Activated B cell treated with CpG ODN at 0.5 μM for 24 hours (primary cell): ENCODE measurements at regions of chr7 and their contacts with region 1.

Region 1: DNA sequence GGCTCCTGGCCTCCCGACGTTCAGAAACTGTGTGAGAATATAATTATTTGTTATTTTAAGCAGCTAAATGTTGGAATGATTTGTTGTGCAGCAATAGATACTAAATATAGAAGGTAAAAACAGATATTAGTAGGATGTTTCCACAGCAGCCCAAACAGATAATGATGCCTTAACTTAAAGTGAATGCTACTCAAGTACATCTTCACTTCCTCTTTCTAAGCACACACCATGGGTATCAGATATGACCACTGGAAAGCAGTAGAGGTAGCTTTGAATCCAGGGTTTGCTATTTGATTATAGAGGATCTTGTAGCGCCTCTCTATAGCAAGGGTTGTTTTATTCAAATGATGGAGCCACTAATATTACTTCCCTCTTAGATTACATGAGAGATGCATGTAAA is 38.2 kb upstream of the BET1 start:
- DNase-seq: no peak
- ATAC-seq: peak; percentile 80
- H3K4me3 Mint-ChIP-seq: no peak overlapping the region
- H3K27ac Mint-ChIP-seq: no peak overlapping the region
- H3K4me1 Mint-ChIP-seq: peaks cover 60% of the 10 kb centered on the region
- H3K27me3 Mint-ChIP-seq: no peaks in the 10 kb centered on the region
- CTCF ChIP-seq: no peak

Region 2: GRCh38 chr7:94028768-94029167 is 13.6 kb before region 1 on chr7:
- CTCF ChIA-PET with region 1: no interaction called
- POLR2A ChIA-PET with region 1: no interaction called
- intact Hi-C with region 1: loop called (anchors 1 kb)
- DNase-seq: no peak
- ATAC-seq: no peak
- H3K4me3 Mint-ChIP-seq: no peak overlapping the region
- H3K27ac Mint-ChIP-seq: no peak overlapping the region
- H3K4me1 Mint-ChIP-seq: peaks cover 13% of the 10 kb centered on the region
- H3K27me3 Mint-ChIP-seq: no peaks in the 10 kb centered on the region
- CTCF ChIP-seq: no peak

Region 3: GRCh38 chr7:94060752-94061151 is 18.4 kb after region 1 on chr7:
- CTCF ChIA-PET with region 1: no interaction called
- POLR2A ChIA-PET with region 1: interaction called, 10 read pairs
- intact Hi-C with region 1: no loop called
- DNase-seq: no peak
- ATAC-seq: no peak
- H3K4me3 Mint-ChIP-seq: no peak overlapping the region
- H3K27ac Mint-ChIP-seq: no peak overlapping the region
- H3K4me1 Mint-ChIP-seq: peaks cover 32% of the 10 kb centered on the region
- H3K27me3 Mint-ChIP-seq: no peaks in the 10 kb centered on the region
- CTCF ChIP-seq: no peak